Activated CD8-positive, alpha-beta T cell treated with anti-CD3 and anti-CD28 coated beads for 36 hours (primary cell): ENCODE measurements at regions of chr17 and their contacts with region 1.

Region 1: GRCh38 chr17:42312285-42313130 is 24.2 kb downstream of the STAT5A start:
- DNase-seq: peak; percentile 94
- ATAC-seq: peak; percentile 70
- H3K4me3 Mint-ChIP-seq: peak overlapping the region; percentile 66
- H3K27ac Mint-ChIP-seq: peak overlapping the region; percentile 94
- H3K4me1 Mint-ChIP-seq: peaks cover 86% of the 10 kb centered on the region
- H3K27me3 Mint-ChIP-seq: no peaks in the 10 kb centered on the region
- CTCF ChIP-seq: peak; percentile 64

Region 2: GRCh38 chr17:42276359-42276608 is 36.2 kb before region 1 on chr17 and contains the start of gene STAT5B:
- CTCF ChIA-PET with region 1: interaction called, 13 read pairs
- POLR2A ChIA-PET with region 1: interaction called, 8 read pairs
- intact Hi-C with region 1: no loop called
- DNase-seq: peak; percentile 64
- ATAC-seq: peak; percentile 65
- H3K4me3 Mint-ChIP-seq: peak within 1 kb of the TSS; percentile 97
- H3K27ac Mint-ChIP-seq: peak within 1 kb of the TSS; percentile 96
- H3K4me1 Mint-ChIP-seq: peaks cover 40% of the 10 kb centered on the region
- H3K27me3 Mint-ChIP-seq: no peaks in the 10 kb centered on the region
- CTCF ChIP-seq: no peak
- total RNA-seq, gene STAT5B: 128 to 129 TPM

Region 3: DNA sequence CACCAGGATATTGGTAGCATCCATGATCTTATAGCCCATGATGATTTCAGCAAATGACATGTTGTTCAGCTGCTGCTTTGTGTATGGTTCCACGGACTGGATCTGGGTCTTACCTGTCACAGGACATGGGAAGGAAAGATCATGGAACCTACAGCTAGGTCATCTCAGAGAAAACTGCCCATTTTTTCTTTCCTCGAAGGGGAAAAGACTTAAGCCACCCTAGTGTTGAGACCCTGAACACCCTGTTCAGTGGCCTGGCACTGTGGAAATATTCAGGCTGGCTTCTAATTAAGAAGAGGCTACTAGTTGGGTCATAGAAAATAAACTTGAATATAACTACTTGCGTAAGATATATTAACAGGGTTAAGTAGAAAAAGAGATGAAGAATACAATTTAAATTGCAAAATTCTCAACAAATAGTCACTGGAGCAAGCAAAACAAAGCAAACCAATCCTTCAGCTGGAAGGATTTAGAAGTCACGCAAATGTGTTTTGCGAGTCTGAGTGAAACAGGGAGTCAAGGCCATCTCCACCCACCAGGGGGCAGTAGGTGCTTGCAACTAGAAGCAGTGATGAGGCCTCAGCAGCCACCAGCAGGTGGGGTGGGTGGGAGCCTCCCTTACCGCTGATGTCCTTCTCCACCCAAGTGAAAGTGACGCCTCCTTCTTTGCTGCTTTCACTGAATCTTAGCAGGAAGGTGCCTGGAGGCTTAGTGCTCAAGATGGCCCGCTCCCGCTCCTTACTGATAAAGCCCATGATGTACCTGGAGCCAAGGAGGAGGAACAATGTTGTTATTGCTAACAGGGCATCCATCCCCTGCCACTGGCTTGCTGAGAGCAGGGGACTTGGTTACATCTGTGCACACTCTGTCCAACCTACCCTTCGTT is 10.1 kb after region 1 on chr17:
- CTCF ChIA-PET with region 1: interaction called, 62 read pairs
- POLR2A ChIA-PET with region 1: interaction called, 30 read pairs
- intact Hi-C with region 1: no loop called
- DNase-seq: peak; percentile 99
- ATAC-seq: peak; percentile 89
- H3K4me3 Mint-ChIP-seq: no peak overlapping the region
- H3K27ac Mint-ChIP-seq: peak overlapping the region; percentile 85
- H3K4me1 Mint-ChIP-seq: peaks cover 52% of the 10 kb centered on the region
- H3K27me3 Mint-ChIP-seq: no peaks in the 10 kb centered on the region
- CTCF ChIP-seq: peak; percentile 100

Region 4: DNA sequence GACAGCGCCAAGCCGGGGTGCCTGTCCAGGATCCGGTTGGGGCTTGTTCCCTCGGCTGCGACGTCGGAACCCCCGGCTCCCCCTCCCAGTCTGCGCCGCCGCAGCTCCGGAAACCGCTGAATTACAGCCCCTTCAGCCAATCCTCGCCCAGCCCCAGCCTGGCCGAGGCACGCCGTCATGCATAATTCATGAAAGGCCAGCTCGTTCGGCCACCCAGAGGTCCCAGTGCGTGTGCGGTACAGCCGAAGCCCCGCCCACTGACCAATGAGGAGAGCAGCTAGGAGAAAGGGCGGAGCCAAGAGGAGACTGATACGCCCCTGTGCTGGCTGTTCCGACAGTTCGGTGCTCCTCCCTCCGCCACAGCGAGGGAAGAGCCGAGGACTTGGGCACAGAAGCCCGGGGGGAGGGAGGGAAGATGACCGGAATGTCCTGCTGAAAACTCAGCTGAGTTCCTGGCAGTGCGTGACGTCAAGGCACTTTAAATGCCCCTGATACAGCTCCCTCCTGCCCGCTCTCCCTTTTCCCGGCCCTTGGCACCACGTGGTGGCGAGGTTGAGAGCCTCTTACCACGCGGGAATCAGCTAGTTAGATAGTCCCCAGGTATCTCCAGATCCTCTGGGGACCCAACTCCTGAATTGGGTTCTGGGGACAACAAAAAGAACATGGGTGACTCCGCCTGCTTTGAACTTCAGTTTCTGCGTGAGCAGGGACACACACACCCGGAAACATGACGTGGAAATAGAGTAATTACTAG is 76.0 kb after region 1 on chr17 and contains the start of gene STAT3:
- CTCF ChIA-PET with region 1: interaction called, 968 read pairs
- POLR2A ChIA-PET with region 1: interaction called, 37 read pairs
- intact Hi-C with region 1: no loop called
- DNase-seq: peak; percentile 100
- ATAC-seq: peak; percentile 89
- H3K4me3 Mint-ChIP-seq: peak within 1 kb of the TSS; percentile 97
- H3K27ac Mint-ChIP-seq: peak within 1 kb of the TSS; percentile 100
- H3K4me1 Mint-ChIP-seq: peaks cover 55% of the 10 kb centered on the region
- H3K27me3 Mint-ChIP-seq: no peaks in the 10 kb centered on the region
- CTCF ChIP-seq: no peak
- total RNA-seq, gene STAT3: 276 to 286 TPM